Activated CD8-positive, alpha-beta T cell treated with anti-CD3 and anti-CD28 coated beads, Interleukin-2, amount 10 ng/mL, durations not matched to agents 7 days and 5 days (primary cell): ENCODE measurements at regions of chr5 and their contacts with region 1.

Region 1: GRCh38 chr5:154072414-154073171 is 33.8 kb downstream of the MFAP3 start:
- DNase-seq: peak; percentile 91
- ATAC-seq: peak; percentile 89
- H3K4me3 Mint-ChIP-seq: peak overlapping the region; percentile 47
- H3K27ac Mint-ChIP-seq: peak overlapping the region; percentile 78
- H3K4me1 Mint-ChIP-seq: peaks cover 55% of the 10 kb centered on the region
- H3K27me3 Mint-ChIP-seq: peaks cover 4% of the 10 kb centered on the region

Region 2: DNA sequence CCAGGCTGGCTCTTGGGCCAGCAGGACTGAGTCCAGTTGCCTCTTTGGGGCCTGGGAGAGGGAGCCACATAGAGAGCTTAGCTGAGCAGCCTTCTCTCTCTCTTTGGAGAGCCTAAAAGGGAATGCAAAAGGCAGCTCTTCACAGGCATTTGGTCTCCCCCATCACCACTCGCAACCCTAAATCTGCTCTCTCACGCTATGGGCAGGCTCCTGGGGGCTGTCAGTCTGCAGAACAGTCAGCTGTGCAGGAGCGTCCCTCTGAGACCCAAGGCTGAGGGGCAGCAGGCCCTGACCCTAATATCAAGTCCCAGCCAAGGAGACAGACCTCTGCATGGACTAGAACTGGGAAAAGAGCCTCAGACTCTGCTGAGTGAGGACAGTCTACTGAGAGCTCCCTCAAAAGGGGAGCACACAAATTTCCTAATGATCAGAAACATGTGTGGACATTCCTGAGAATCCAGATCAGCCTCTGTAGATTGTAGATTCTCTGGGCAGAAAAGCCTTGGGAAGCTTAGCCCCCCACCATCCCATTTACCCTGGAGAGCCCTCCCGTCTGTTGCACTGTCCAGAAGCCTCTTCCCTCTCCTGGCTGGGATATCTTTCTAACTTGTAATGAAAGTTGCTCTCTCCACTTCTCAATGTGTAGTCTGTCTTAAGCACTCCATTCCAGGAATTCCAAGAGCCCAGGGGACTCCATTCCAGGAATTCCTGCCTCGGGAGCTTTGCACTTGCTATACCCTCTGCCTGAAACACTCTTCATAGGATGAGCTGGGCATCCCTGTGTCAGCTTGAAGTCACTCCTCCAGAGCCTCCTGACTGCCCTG is 113.2 kb before region 1 on chr5:
- CTCF ChIA-PET with region 1: no interaction called
- POLR2A ChIA-PET with region 1: no interaction called
- DNase-seq: no peak
- ATAC-seq: no peak
- H3K4me3 Mint-ChIP-seq: no peak overlapping the region
- H3K27ac Mint-ChIP-seq: no peak overlapping the region
- H3K4me1 Mint-ChIP-seq: peaks cover 11% of the 10 kb centered on the region
- H3K27me3 Mint-ChIP-seq: peaks cover 2% of the 10 kb centered on the region

Region 3: DNA sequence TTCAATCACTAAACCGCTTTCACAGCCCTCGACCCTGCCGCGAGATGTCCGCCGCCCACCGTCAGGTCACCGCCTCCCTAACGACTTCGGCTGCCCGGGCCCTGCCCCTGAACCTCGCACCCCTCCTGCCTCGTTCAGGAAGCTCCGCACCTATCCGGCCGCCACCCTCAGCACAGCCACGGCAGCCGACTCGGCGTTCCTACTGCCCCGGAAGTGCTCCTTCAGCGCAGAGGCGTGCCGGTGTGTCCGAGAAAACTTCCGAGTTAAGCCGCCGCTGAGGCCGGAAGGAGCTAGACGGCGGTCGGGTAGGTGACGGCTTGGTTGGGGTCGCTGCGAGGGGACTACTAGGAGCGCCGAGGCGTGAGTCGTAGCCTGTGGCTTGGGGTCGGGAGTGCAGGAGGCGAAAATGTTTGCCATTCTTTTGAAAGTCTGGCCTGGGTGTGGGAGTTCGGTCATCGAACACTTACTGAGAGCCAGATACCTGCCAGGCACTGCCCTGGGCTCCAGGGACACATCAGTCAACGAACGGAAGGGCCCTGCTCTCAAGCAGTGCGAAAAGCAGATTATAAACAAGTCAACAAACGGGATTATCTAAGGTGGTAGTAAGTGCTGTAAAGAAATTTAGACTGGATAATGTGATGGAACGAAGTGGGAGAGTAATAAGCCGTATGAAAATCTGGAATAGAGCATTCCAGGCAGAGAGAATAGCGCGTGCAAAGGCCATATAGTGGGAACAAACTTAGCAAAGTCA is 33.7 kb before region 1 on chr5 and contains the starts of genes FAM114A2 and MFAP3:
- CTCF ChIA-PET with region 1: interaction called, 23 read pairs
- POLR2A ChIA-PET with region 1: interaction called, 5 read pairs
- DNase-seq: peak; percentile 93
- ATAC-seq: peak; percentile 100
- H3K4me3 Mint-ChIP-seq: peak within 1 kb of the TSS; percentile 87
- H3K27ac Mint-ChIP-seq: peak within 1 kb of the TSS; percentile 97
- H3K4me1 Mint-ChIP-seq: peaks cover 47% of the 10 kb centered on the region
- H3K27me3 Mint-ChIP-seq: no peaks in the 10 kb centered on the region
- total RNA-seq, gene FAM114A2: 17.8 to 23.1 TPM
- total RNA-seq, gene MFAP3: 21.0 to 23.0 TPM

Region 4: DNA sequence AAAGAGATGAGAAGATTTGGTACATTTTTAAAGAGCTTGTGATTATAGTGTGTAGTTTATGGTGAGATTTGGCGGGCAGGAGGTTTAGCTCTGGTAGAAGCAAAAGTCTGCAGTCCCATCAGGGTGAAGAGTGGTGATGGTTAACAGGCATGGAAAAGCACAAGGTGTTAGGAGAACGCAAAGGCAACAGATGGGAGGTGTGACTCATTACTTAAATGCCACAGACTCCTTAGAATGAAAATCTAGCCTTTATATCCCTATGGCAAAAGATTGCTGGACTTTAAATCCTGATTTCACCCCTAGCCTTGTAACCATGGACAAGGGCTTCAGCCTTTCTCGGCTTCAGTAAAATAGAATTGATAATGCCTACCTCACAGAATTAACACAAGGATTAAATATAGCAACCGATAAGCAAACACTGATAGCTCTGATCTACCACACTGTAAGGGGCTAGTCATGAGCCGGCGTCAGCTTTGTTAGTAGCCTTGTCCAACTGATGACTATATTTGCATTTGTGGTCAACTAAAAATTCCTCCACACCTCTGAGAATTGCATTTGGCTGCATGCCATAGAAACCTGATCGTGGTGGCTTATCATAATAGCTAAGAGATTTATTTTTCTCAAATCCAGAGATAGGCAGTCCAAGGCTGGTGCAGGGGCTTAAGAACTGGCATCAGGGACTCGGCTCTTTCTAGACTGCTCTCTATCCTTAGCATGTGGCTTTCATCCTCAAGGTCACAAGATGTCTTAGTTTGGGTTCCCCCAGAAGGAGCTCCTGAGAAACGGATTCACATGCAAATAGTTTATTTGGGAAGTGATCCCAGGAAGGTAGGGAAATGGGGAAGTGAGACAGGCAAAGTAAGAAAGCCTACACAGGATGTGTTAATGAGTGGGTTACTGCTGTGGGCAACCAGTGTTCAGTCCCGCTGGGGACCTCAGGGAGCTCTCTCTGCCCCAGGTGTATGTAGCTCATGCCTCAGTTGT is 14.2 kb before region 1 on chr5:
- CTCF ChIA-PET with region 1: interaction called, 39 read pairs
- POLR2A ChIA-PET with region 1: interaction called, 3 read pairs
- DNase-seq: no peak
- ATAC-seq: peak; percentile 58
- H3K4me3 Mint-ChIP-seq: no peak overlapping the region
- H3K27ac Mint-ChIP-seq: peak overlapping the region; percentile 36
- H3K4me1 Mint-ChIP-seq: peaks cover 21% of the 10 kb centered on the region
- H3K27me3 Mint-ChIP-seq: no peaks in the 10 kb centered on the region

Region 5: DNA sequence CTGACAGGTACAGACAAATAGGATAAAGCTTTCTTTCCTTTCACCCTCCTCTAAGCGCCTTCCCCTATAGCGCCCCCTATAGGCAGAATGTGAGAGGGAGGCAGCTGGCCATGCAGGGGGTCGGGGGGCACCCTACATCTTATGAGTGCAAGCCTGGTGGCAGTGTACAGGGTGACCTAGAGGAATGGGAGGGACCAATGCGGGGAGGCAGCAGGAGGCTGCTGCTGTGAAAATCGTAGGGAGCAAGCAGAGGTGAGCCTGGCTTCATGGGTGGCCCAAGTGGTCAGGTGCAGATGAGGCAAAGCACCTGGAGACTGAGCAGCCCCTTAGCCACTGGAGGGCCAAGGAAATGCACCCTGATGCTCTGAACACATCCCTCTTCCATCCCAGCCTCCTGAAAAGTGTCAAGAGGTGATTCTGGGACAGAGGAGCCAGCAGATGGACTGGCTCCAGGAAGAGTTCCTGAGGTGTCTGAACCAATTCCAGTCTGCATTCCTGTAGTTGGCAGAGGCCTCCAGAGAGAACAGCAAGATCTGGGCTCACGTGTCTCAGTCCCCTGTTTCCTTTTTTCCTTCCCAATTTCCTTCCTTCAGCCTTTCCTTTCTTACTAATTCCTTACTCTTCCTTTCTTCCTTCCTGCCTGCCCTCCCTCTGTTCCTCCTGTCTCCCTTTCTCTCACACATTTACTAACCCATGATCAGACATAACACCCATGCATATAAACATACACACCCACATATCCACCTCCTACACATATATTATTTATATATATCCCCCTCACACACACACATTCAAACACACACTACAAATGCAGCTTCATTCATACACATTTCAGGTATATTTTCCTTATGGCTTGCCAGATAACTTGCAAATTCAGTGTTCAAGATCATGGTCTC is 85.1 kb after region 1 on chr5:
- CTCF ChIA-PET with region 1: interaction called, 10 read pairs
- POLR2A ChIA-PET with region 1: no interaction called
- DNase-seq: no peak
- ATAC-seq: no peak
- H3K4me3 Mint-ChIP-seq: no peak overlapping the region
- H3K27ac Mint-ChIP-seq: no peak overlapping the region
- H3K4me1 Mint-ChIP-seq: no peaks in the 10 kb centered on the region
- H3K27me3 Mint-ChIP-seq: peaks cover 55% of the 10 kb centered on the region

Region 6: DNA sequence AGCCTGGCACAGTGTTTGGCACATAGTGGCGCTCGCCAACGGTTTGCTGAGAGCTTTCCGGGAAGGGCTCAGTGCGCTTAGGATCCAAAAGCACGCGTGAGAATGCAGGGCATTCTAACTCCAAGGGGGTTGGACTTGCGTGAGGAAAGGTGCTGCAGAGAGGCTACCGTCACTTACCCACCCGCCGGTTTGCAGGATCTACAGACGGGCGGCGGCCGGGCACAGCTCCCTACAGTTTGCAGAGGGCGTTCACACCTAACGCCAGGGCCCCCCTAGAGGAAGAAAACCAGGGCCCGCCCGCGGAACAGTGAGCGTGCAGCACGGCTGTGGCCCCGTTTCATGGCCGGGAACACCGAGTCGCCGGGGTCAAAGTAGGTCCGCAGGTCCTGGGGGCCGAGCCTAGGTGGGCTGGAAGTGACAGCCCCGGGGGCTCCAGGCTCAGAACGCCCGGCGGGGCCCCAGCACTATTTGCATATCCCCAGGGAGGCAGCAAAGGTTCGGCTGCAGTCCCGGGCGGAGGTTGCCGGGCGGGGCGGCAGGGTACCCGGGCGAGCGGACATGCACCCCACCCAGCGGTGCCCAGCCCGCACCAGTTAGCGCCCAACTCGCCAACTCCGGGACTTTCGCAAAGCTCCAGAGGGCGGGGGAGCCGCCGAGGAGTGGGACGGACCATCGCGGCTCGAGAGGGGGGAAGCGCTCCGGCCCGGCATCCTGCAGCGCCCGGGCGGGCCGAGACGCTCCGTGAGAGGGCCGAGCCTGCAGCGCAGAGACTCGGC is 117.4 kb after region 1 on chr5:
- CTCF ChIA-PET with region 1: interaction called, 153 read pairs
- POLR2A ChIA-PET with region 1: interaction called, 20 read pairs
- DNase-seq: peak; percentile 85
- ATAC-seq: peak; percentile 82
- H3K4me3 Mint-ChIP-seq: peak overlapping the region; percentile 80
- H3K27ac Mint-ChIP-seq: peak overlapping the region; percentile 76
- H3K4me1 Mint-ChIP-seq: peaks cover 31% of the 10 kb centered on the region
- H3K27me3 Mint-ChIP-seq: peaks cover 24% of the 10 kb centered on the region

Region 7: DNA sequence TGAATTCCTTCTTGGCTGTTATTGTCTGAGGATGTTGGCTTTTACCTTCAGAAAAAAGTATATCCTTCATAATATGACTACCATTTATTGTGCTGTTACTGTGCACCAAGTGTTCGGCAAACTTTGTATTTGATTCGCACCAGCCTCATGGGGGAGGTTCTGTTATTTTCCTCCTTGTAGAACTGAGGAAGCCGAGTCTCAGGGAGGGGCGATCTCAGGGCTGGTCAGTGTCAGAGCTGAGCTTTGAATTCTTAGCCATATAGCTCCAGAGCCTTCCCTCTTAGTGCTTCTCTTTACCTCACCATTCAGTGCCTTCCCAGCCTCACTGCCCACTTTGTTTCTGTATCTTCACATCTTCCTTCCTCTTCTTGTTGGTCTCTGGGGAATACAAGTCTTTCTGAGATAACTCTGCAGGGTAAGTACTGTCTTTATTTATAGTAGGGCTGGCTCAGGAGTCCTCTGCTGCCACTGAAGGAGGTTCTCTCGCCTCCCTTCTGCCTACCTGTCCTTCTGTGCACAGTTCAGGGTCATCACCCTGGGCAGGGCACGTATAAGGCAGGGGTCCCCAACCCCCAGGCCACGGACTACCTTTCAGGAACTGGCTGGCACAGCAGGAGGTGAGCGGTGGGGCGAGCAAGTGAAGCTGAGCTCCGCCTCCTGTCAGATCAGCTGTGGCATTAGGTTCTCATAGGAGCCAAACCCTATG is 166.3 kb after region 1 on chr5:
- CTCF ChIA-PET with region 1: interaction called, 36 read pairs
- POLR2A ChIA-PET with region 1: no interaction called
- DNase-seq: no peak
- ATAC-seq: no peak
- H3K4me3 Mint-ChIP-seq: no peak overlapping the region
- H3K27ac Mint-ChIP-seq: no peak overlapping the region
- H3K4me1 Mint-ChIP-seq: peaks cover 22% of the 10 kb centered on the region
- H3K27me3 Mint-ChIP-seq: no peaks in the 10 kb centered on the region